Mucosa of descending colon (tissue), 3 donors: ENCODE measurements at regions of chr19 and their contacts with region 1.

Region 1: DNA sequence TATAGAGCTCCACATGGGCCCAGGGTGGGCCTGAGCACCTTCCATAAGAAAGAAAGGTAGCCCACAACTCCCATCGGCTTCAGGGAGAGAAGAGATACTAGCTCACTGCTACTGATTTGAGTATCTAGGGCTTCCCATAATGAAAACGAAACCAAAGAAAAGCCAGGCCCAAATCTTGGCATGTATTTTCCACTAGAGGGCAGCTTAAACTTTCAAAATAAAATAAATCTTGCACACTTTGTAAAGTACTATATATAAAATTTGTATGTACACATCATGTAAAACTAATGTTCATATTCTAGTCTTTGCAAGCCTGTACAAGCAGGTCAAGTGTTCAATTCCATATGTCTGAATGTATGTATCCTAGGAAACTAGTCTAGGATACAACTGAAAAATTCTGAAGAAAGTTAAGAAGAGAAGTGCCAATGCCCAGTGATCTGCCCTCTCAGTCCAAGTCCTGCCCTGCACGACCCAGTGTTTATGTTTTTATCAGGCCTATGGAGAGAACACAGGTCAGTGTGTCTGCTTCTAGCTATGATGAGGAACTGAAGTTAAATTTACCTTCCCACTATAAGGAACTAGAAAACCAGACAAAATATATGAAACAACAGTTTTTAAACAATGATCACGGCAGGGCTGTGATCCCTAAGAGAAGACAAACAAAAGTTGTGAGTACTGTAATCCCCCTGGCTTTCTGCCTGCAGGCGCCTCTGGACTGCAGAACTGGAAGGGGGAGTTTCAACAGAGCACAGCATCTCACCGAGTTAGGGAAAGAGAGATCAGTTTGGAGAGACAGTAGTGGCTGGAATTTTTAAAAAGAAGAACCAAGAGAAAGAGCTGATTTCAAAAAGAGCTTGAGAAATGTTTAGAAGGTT is 475.7 kb downstream of the UQCRFS1 start:
- DNase-seq: peak in 1 of 3 donors; percentile 29
- ATAC-seq: no peak
- H3K4me3 ChIP-seq: no peak overlapping the region
- H3K4me1 ChIP-seq: no peaks in the 10 kb centered on the region
- CTCF ChIP-seq: no peak

Region 2: GRCh38 chr19:28694819-28695218 is 42.4 kb before region 1 on chr19:
- intact Hi-C with region 1: no loop called
- DNase-seq: no peak
- ATAC-seq: no peak
- H3K4me3 ChIP-seq: no peak overlapping the region
- H3K4me1 ChIP-seq: no peaks in the 10 kb centered on the region
- CTCF ChIP-seq: no peak

Region 3: GRCh38 chr19:28883241-28883693 is 146.0 kb after region 1 on chr19:
- intact Hi-C with region 1: loop called in 1 of 2 experiments (anchors 10 kb)
- DNase-seq: peak in 1 of 3 donors; percentile 1
- ATAC-seq: no peak
- H3K4me3 ChIP-seq: no peak overlapping the region
- H3K4me1 ChIP-seq: no peaks in the 10 kb centered on the region
- CTCF ChIP-seq: no peak

Region 4: GRCh38 chr19:28966803-28967328 is 229.6 kb after region 1 on chr19:
- intact Hi-C with region 1: no loop called
- DNase-seq: no peak
- ATAC-seq: no peak
- H3K4me3 ChIP-seq: no peak overlapping the region
- H3K4me1 ChIP-seq: no peaks in the 10 kb centered on the region
- CTCF ChIP-seq: no peak